H1 (cell line): ENCODE measurements at regions of chr11 and their contacts with region 1.

Region 1: DNA sequence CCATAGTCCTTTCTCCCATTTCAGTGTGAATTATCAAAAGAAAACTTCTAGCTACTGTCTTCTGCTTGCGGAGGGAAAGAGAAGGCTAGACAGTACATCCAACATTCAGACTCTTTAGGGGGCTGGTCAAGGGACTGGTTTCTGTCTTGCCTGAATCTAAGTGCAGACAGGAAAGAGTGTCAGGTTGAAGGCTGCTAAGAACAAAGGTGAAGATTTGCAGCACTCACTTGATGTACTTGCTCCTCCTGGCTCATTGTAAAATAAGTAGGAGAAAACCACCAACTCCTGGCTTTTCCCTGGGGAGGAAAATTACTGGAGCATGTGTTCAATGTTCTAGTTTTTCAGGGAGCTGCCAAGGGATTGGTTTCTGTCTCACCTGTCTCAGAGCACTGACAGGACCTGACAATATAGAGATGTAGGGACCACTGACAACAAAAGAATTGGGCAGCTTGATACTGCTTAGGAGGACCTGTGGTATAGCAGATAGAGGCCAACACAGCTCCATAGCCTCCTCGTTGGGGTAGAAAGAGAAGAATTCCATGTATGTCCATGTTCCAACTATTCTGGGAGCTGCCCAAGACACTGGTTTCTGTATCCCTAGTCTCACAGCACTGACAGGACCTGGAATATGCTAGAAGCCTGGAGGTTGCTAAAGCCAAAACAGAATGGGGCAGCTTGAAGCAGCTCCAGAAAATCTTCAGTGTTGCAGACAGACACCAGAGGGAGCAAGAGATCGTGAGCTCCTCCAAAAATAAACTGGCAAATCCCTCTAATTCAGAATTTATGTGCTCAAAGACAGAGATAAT is 39.7 kb upstream of the MMP12 start:
- DNase-seq: peak; percentile 19 to 54
- H3K4me3 ChIP-seq: no peak overlapping the region
- H3K27ac ChIP-seq: no peak overlapping the region
- H3K4me1 ChIP-seq: peaks cover 0 to 7% (median 5%) of the 10 kb centered on the region in 4 experiments; a peak in 4 of 7 replicates
- H3K27me3 ChIP-seq: no peaks in the 10 kb centered on the region
- CTCF ChIP-seq: peak; percentile 15 to 74 (median 71)
- EP300 ChIP-seq: no peak
- POLR2A ChIP-seq: no peak
- RAD21 ChIP-seq: peak; percentile 64 to 69

Region 2: DNA sequence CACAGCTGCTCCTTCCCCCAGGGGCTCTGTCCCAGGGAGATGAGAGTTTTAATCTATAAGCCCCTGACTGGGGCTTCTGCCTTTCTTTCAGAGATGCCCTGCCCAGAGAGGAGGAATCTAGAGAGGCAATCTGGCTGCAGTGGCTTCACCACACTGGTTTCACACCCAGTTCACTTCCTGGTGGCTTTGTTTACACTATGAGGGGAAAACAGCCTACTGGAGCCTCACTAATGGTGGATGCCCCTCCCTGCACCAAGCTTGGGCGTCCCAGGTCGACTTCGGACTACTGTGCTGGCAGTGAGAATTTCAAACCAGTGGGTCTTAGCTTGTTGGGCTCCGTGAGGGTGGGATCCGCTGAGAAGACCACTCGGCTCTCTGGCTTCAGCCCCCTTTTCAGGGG is 95.0 kb before region 1 on chr11:
- CTCF ChIA-PET with region 1: interaction called, 12 read pairs
- POLR2A ChIA-PET with region 1: no interaction called
- DNase-seq: no peak
- H3K4me3 ChIP-seq: no peak overlapping the region
- H3K27ac ChIP-seq: no peak overlapping the region
- H3K4me1 ChIP-seq: no peaks in the 10 kb centered on the region
- H3K27me3 ChIP-seq: no peaks in the 10 kb centered on the region
- CTCF ChIP-seq: no peak
- EP300 ChIP-seq: no peak
- POLR2A ChIP-seq: no peak
- RAD21 ChIP-seq: no peak

Region 3: DNA sequence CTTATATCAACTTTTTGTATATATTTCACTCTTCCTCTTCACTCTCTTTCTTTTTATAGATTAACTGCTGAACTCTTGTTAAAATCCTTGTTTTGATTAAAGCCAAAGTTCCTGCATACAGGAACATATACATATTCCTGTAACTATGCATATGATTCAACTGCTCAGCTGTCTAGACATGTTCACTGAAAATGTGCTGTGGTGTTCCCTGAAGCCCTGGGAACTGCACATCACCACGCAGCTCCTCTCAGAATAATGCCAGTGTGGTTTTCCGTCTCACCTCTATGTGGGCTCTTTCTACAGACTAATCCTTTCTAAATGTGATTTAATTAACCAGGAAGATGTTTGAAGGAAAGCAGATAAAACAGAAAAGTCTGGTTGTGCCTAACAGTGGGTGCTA is 14.1 kb before region 1 on chr11:
- CTCF ChIA-PET with region 1: interaction called, 11 read pairs
- POLR2A ChIA-PET with region 1: interaction called, 3 read pairs
- DNase-seq: no peak
- H3K4me3 ChIP-seq: no peak overlapping the region
- H3K27ac ChIP-seq: no peak overlapping the region
- H3K4me1 ChIP-seq: no peaks in the 10 kb centered on the region
- H3K27me3 ChIP-seq: no peaks in the 10 kb centered on the region
- CTCF ChIP-seq: no peak
- EP300 ChIP-seq: no peak
- POLR2A ChIP-seq: no peak
- RAD21 ChIP-seq: no peak

Region 4: DNA sequence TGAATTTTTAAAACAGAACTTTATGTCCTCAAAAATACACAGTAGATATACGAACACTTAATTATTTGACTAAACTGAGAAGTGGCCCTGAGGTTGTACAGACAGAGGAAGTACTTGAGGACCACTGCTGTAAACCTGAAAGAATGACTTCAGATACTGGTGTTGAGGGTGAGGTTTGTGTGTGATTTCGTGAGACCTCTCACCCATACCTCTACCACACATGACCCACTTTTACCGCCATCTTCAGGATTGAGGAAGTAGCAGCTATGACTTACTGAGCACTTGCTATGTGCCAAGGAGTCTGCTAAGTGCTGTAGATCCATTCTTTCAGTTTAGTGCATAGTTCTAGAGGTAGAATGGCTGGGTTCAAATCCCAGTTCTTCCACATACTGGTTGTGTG is 19.2 kb after region 1 on chr11:
- CTCF ChIA-PET with region 1: interaction called, 60 read pairs
- POLR2A ChIA-PET with region 1: no interaction called
- DNase-seq: no peak
- H3K4me3 ChIP-seq: no peak overlapping the region
- H3K27ac ChIP-seq: no peak overlapping the region
- H3K4me1 ChIP-seq: no peaks in the 10 kb centered on the region
- H3K27me3 ChIP-seq: no peaks in the 10 kb centered on the region
- CTCF ChIP-seq: peak in 1 of 3 experiments; percentile 19; a peak in 1 of 4 replicates
- EP300 ChIP-seq: no peak
- POLR2A ChIP-seq: no peak
- RAD21 ChIP-seq: peak in 1 of 2 experiments; percentile 7; a peak in 1 of 4 replicates